Activated CD4-positive, alpha-beta T cell treated with anti-CD3 and anti-CD28 coated beads, Interleukin-2, amount 10 ng/mL, durations not matched to agents 24 days and 14 days (primary cell): ENCODE measurements at regions of chr19 and their contacts with region 1.

Region 1: GRCh38 chr19:7680606-7681339 is at the start of gene TRAPPC5:
- DNase-seq: peak; percentile 98
- H3K4me3 Mint-ChIP-seq: peak within 1 kb of the TSS; percentile 97
- H3K27ac Mint-ChIP-seq: peak within 1 kb of the TSS; percentile 96
- H3K4me1 Mint-ChIP-seq: peaks cover 43% of the 10 kb centered on the region
- H3K27me3 Mint-ChIP-seq: peaks cover 18% of the 10 kb centered on the region
- total RNA-seq, gene TRAPPC5: 82.9 and 84.1 TPM in 2 replicates

Region 2: GRCh38 chr19:7562646-7563393 is 118.0 kb before region 1 on chr19:
- intact Hi-C with region 1: loop called (anchors 1 kb)
- DNase-seq: peak; percentile 70
- H3K4me3 Mint-ChIP-seq: no peak overlapping the region
- H3K27ac Mint-ChIP-seq: no peak overlapping the region
- H3K4me1 Mint-ChIP-seq: no peaks in the 10 kb centered on the region
- H3K27me3 Mint-ChIP-seq: no peaks in the 10 kb centered on the region

Region 3: DNA sequence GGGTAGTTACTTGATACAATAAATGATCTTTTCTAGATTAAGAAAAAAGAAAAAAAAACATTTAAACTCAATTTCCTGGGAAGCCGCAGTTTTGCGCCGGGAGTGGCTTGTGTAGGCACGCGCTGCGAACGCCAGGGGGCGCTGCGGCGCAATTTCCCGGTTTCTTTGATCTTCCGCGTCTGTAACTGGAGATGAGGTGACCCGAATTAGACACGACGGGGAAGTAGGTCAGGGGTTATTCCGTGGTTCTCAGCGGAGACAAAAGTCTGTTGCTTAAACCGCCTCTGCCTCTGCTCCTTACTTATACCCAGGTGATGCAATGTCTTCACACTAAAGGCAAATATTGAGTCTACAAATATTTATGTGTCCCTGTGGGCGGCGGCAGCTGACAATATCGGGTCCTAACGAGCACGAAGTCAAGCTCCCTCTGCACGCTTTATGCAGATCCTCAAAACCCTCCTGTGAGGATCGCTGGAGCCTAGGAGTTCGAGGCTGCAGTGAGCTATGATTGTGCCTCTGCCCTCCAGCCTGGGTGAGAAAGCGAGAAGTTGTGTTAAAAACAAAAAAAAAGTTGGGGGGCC is 28.6 kb before region 1 on chr19:
- intact Hi-C with region 1: loop called (anchors 1 kb)
- DNase-seq: peak; percentile 96
- H3K4me3 Mint-ChIP-seq: peak overlapping the region; percentile 71
- H3K27ac Mint-ChIP-seq: peak overlapping the region; percentile 80
- H3K4me1 Mint-ChIP-seq: peaks cover 14% of the 10 kb centered on the region
- H3K27me3 Mint-ChIP-seq: peaks cover 2% of the 10 kb centered on the region

Region 4: DNA sequence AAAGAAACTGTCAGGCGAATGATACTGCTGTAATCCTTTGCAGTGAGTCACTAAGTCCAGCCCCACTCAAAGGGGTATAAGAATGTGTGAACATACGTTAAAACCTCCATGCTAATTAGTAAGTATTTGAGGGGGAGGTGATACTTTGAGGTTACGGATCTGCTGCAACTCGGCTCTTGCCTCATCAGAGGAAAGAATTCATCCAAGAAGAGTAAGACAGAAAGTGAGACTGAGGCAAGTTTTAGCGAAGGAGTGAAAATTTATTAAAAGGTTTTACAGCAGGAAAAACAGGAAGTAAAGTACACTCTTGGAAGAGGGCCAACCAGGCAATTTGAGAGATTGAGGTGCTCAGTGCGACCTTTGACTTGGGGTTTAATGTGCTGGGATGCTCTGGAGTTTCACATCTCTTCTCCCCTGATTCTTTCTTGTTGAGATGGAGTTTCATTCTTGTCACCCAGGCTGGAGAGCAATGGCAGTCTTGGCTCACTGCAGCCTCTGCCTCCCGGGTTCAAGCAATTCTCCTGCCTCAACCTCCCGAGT is 92.0 kb after region 1 on chr19:
- intact Hi-C with region 1: loop called (anchors 1 kb)
- DNase-seq: no peak
- H3K4me3 Mint-ChIP-seq: peak overlapping the region; percentile 24
- H3K27ac Mint-ChIP-seq: peak overlapping the region; percentile 25
- H3K4me1 Mint-ChIP-seq: peaks cover 12% of the 10 kb centered on the region
- H3K27me3 Mint-ChIP-seq: peaks cover 27% of the 10 kb centered on the region

Region 5: GRCh38 chr19:7806876-7807275 is 126.1 kb after region 1 on chr19:
- intact Hi-C with region 1: loop called (anchors 2 kb)
- DNase-seq: no peak
- H3K4me3 Mint-ChIP-seq: no peak overlapping the region
- H3K27ac Mint-ChIP-seq: no peak overlapping the region
- H3K4me1 Mint-ChIP-seq: peaks cover 7% of the 10 kb centered on the region
- H3K27me3 Mint-ChIP-seq: peaks cover 24% of the 10 kb centered on the region

Region 6: GRCh38 chr19:7817801-7818200 is 137.0 kb after region 1 on chr19:
- intact Hi-C with region 1: no loop called
- DNase-seq: no peak
- H3K4me3 Mint-ChIP-seq: no peak overlapping the region
- H3K27ac Mint-ChIP-seq: no peak overlapping the region
- H3K4me1 Mint-ChIP-seq: peaks cover 5% of the 10 kb centered on the region
- H3K27me3 Mint-ChIP-seq: peaks cover 33% of the 10 kb centered on the region